ENCODE measurements at regions of chr7 and their contacts with region 1.

Region 1: GRCh38 chr7:128455551-128456254 is at the start of gene HILPDA:
- DNase-seq: peak; percentile 95
- ATAC-seq: peak; percentile 91
- H3K4me3 Mint-ChIP-seq: peak within 1 kb of the TSS; percentile 94
- H3K27ac Mint-ChIP-seq: peak within 1 kb of the TSS; percentile 93
- H3K4me1 Mint-ChIP-seq: peaks cover 55% of the 10 kb centered on the region
- H3K27me3 Mint-ChIP-seq: peaks cover 26% of the 10 kb centered on the region
- total RNA-seq, gene HILPDA: 13.2 to 24.0 TPM

Region 2: GRCh38 chr7:128415217-128415785 is 40.4 kb before region 1 on chr7:
- CTCF ChIA-PET with region 1: interaction called, 13 read pairs
- DNase-seq: no peak
- ATAC-seq: no peak
- H3K4me3 Mint-ChIP-seq: no peak overlapping the region
- H3K27ac Mint-ChIP-seq: no peak overlapping the region
- H3K4me1 Mint-ChIP-seq: peaks cover 4% of the 10 kb centered on the region
- H3K27me3 Mint-ChIP-seq: peaks cover 24% of the 10 kb centered on the region

Region 3: GRCh38 chr7:128431221-128431620 is 24.5 kb before region 1 on chr7:
- CTCF ChIA-PET with region 1: interaction called, 188 read pairs
- DNase-seq: no peak
- ATAC-seq: no peak
- H3K4me3 Mint-ChIP-seq: no peak overlapping the region
- H3K27ac Mint-ChIP-seq: no peak overlapping the region
- H3K4me1 Mint-ChIP-seq: peaks cover 13% of the 10 kb centered on the region
- H3K27me3 Mint-ChIP-seq: peaks cover 25% of the 10 kb centered on the region

Region 4: DNA sequence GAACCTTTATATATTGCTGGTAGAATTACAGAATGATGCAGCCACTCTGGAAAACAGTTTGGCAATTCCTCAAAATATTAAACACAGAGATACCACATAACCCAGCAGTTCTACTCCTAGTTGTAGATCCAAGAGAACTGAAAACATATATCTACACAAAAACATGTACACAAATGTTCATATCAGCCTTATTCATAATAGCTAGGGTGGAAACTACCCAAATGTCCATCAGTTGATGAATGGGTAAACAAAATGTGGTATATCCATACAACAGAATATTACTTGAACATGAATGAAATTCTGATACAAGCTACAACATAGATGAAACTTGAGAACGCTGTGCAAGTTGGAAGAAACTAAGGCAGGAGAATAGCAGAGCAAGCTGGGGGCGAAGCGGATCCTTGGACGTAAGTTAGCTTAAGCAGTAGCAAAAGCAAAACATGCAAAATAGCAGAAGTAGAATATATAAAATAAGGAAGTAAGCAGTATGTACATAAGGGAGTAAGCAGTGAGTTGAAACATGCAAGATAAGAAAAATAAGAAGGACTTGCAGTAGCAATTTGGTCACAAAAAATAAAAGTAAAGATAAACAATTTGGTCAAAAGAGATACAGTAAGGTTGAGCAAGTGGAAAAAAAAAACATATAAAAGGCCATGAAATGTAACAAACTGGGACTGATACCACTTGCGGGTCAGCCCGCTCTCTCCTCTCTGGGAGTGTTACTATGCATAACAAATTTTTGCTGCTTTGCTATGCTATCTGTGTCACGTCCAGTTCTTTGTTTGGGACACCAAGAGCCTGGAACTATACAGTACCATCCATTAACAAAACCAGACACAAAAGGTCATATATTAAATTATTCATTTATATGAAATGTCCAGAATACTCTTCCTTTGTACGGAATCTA is 18.0 kb before region 1 on chr7:
- CTCF ChIA-PET with region 1: interaction called, 20 read pairs
- DNase-seq: no peak
- ATAC-seq: no peak
- H3K4me3 Mint-ChIP-seq: no peak overlapping the region
- H3K27ac Mint-ChIP-seq: no peak overlapping the region
- H3K4me1 Mint-ChIP-seq: no peaks in the 10 kb centered on the region
- H3K27me3 Mint-ChIP-seq: peaks cover 13% of the 10 kb centered on the region

Region 5: GRCh38 chr7:128443831-128444600 is 11.7 kb before region 1 on chr7:
- CTCF ChIA-PET with region 1: interaction called, 13 read pairs
- DNase-seq: no peak
- ATAC-seq: no peak
- H3K4me3 Mint-ChIP-seq: no peak overlapping the region
- H3K27ac Mint-ChIP-seq: no peak overlapping the region
- H3K4me1 Mint-ChIP-seq: peaks cover 3% of the 10 kb centered on the region
- H3K27me3 Mint-ChIP-seq: no peaks in the 10 kb centered on the region

Measured in activated CD8-positive, alpha-beta memory T cell treated with anti-CD3 and anti-CD28 coated beads, Interleukin-2, amount 10 ng/mL, durations not matched to agents 7 days and 5 days (primary cell).